ENCODE measurements at regions of chr7 and their contacts with region 1.

Region 1: DNA sequence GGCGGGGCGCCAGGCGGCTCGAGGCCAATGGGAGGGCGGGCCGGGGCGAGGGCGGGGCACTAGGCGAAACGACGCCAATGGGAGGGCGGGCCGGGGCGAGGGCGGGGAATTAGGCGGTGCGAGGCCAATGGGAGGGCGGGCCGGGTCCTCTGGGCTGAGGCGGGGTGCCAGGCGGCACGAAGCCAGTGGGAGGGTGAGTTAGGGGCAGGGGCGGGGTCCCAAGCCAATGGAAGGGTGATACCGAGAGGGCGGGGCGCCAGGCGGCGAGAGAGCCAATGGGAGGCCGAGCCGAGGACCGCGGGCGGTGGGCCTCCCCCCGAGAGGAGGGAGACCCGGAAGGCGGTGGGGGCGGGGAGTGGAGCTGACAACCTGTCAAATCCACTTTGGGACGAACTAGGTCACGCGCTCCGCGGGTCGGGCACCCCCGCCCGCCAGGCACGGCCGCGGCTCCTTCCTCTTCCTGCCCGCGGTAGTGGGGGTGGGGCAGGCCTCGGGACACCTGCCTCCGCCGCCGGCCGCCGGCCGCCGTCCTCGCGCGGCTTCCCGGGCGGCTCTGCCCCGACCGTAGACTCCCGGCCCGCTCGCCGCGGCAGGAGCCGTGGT is 28.0 kb upstream of the KMT2C start:
- DNase-seq: peak; percentile 99
- H3K4me3 ChIP-seq: peak overlapping the region; percentile 42 to 97 (median 69)
- H3K27ac ChIP-seq: peak overlapping the region; percentile 91
- H3K4me1 ChIP-seq: peaks cover 12% of the 10 kb centered on the region
- H3K27me3 ChIP-seq: no peaks in the 10 kb centered on the region
- CTCF ChIP-seq: no peak
- POLR2A ChIP-seq: peak; percentile 76

Region 2: DNA sequence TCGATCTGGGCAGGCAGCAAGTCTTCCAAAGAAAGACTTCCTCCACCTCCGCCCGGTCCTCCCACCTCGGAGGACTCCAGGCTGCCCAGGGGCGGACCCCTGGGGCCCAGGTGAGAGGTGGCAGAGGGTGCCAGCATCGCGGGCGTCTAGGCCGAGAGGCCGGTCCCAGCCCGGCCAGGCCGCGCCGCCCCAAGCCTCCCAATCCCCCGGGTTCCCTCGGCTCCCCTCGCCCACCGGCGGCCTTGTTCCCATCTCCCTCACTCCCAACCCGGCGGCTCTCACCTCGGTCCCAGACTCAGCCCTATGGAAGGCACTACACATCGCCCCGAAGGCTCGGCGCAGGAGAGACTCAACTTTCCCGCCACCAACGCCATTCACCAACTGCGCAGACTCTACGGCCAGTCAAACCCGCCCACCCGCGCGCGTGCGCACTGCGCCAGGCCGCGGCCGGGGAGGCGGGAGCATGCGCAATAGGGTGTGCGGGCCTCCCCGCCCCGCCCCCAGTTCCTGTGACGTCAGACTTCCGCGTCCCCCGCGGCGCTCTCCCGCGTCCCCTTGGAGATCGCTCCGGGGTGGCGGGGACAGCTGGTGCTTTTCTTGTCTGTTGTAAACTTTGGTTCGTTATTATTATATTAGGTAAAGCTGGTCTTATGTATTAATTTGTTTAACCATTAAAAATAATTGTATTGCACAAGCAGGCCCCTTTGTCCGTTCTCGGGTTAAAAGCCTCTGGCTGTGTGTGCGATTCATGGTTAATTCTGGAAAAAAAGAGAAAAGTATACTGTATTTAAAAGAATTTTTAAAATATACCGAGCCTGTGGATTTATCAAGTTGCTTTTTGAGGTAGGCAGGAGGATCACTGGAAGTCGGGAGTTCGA is 212.2 kb after region 1 on chr7 and contains the start of gene XRCC2:
- CTCF ChIA-PET with region 1: no interaction called
- POLR2A ChIA-PET with region 1: no interaction called
- dilution Hi-C with region 1: no loop called
- intact Hi-C with region 1: loop called (anchors 1 kb)
- DNase-seq: peak; percentile 94
- H3K4me3 ChIP-seq: peak within 1 kb of the TSS; percentile 93 to 95 (median 94)
- H3K27ac ChIP-seq: peak within 1 kb of the TSS; percentile 84
- H3K4me1 ChIP-seq: peaks cover 11% of the 10 kb centered on the region
- H3K27me3 ChIP-seq: no peaks in the 10 kb centered on the region
- CTCF ChIP-seq: no peak
- POLR2A ChIP-seq: peak; percentile 96
- total RNA-seq, gene XRCC2: 8.5 and 8.8 TPM in 2 replicates